GM12878 (cell line): ENCODE measurements at regions of chr3 and their contacts with region 1.

Region 1: GRCh38 chr3:49327485-49327884 is 12.4 kb downstream of the USP4 start:
- DNase-seq: no peak
- ATAC-seq: peak; percentile 61
- H3K4me3 ChIP-seq: no peak overlapping the region
- H3K27ac ChIP-seq: no peak overlapping the region
- H3K4me1 ChIP-seq: no peaks in the 10 kb centered on the region
- H3K27me3 ChIP-seq: no peaks in the 10 kb centered on the region
- CTCF ChIP-seq: peak; percentile 18 to 27 (median 22); a peak in 3 of 6 replicates
- EP300 ChIP-seq: no peak
- POLR2A ChIP-seq: no peak
- RAD21 ChIP-seq: peak; percentile 37; the same call in 1 of the 2 replicates

Region 2: GRCh38 chr3:49133226-49133951 is 194.1 kb before region 1 on chr3:
- CTCF ChIA-PET with region 1: no interaction called
- POLR2A ChIA-PET with region 1: no interaction called
- RAD21 ChIA-PET with region 1: no interaction called
- SMC1A ChIA-PET with region 1: no interaction called
- in situ Hi-C with region 1: no loop called
- intact Hi-C with region 1: no loop called
- DNase-seq: no peak
- ATAC-seq: no peak; the same call in 2 of the 3 replicates
- H3K4me3 ChIP-seq: no peak overlapping the region
- H3K27ac ChIP-seq: no peak overlapping the region
- H3K4me1 ChIP-seq: no peaks in the 10 kb centered on the region
- H3K27me3 ChIP-seq: peaks cover 3 to 4% of the 10 kb centered on the region in 2 experiments; a peak in 2 of 4 replicates
- CTCF ChIP-seq: no peak
- EP300 ChIP-seq: no peak
- POLR2A ChIP-seq: no peak
- RAD21 ChIP-seq: no peak

Region 3: DNA sequence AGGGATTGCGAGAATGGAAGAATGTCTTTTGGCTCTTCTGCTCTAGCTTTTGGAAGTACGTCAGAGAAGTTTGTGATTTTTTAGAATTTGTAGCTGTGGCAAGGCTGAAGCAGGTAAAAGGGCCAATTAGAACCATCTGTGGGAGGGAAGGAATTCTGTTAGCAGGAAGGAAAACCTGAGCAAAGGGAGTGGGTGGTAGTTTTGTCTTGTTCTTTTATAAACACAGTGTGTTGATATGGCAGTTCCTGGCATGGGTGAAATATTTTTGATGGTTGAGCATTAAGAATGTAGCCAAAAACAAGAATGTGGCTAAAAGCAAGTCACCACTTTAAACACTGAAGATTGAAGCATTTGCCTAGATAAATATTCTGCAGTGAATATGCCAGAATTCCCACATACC is 166.4 kb after region 1 on chr3:
- CTCF ChIA-PET with region 1: no interaction called
- POLR2A ChIA-PET with region 1: no interaction called
- RAD21 ChIA-PET with region 1: no interaction called
- SMC1A ChIA-PET with region 1: no interaction called
- in situ Hi-C with region 1: no loop called
- intact Hi-C with region 1: no loop called
- DNase-seq: no peak
- ATAC-seq: no peak
- H3K4me3 ChIP-seq: no peak overlapping the region
- H3K27ac ChIP-seq: no peak overlapping the region
- H3K4me1 ChIP-seq: peaks cover 7% of the 10 kb centered on the region
- H3K27me3 ChIP-seq: no peaks in the 10 kb centered on the region
- CTCF ChIP-seq: no peak
- EP300 ChIP-seq: no peak
- POLR2A ChIP-seq: no peak
- RAD21 ChIP-seq: no peak

Region 4: DNA sequence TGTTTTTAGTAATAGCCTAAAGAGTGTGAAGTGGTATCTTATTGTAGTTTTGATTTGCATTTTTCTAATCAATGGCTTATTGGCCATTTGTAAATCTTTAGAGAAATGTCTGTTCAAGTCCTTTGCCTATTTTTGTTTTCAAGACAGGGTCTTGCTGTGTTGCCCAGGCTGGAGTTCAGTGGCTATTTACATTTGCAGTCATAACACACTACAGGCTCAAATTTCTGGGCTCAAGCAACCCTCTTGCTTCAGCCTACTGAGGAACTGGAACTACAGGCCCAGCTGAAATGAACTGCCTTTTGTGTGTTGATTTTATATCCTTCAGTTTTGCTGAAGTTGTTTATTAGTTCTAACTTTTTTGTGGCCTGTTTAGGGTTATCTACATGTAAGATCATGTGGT is 254.7 kb after region 1 on chr3:
- CTCF ChIA-PET with region 1: no interaction called
- POLR2A ChIA-PET with region 1: interaction called, 10 read pairs
- RAD21 ChIA-PET with region 1: no interaction called
- SMC1A ChIA-PET with region 1: no interaction called
- in situ Hi-C with region 1: no loop called
- intact Hi-C with region 1: no loop called
- DNase-seq: no peak
- ATAC-seq: no peak
- H3K4me3 ChIP-seq: no peak overlapping the region
- H3K27ac ChIP-seq: no peak overlapping the region
- H3K4me1 ChIP-seq: no peaks in the 10 kb centered on the region
- H3K27me3 ChIP-seq: no peaks in the 10 kb centered on the region
- CTCF ChIP-seq: no peak
- EP300 ChIP-seq: no peak
- POLR2A ChIP-seq: no peak
- RAD21 ChIP-seq: no peak